SK-N-SH (cell line): ENCODE measurements at regions of chr3 and their contacts with region 1.

Region 1: GRCh38 chr3:12706504-12707253 is 42.8 kb upstream of the RAF1 start:
- DNase-seq: peak; percentile 73
- H3K4me3 ChIP-seq: no peak overlapping the region
- H3K27ac ChIP-seq: no peak overlapping the region
- H3K4me1 ChIP-seq: peaks cover 0 to 5% of the 10 kb centered on the region in 2 experiments; a peak in 1 of 4 replicates
- H3K27me3 ChIP-seq: no peaks in the 10 kb centered on the region
- CTCF ChIP-seq: peak; percentile 76
- EP300 ChIP-seq: no peak
- RAD21 ChIP-seq: peak; percentile 83

Region 2: DNA sequence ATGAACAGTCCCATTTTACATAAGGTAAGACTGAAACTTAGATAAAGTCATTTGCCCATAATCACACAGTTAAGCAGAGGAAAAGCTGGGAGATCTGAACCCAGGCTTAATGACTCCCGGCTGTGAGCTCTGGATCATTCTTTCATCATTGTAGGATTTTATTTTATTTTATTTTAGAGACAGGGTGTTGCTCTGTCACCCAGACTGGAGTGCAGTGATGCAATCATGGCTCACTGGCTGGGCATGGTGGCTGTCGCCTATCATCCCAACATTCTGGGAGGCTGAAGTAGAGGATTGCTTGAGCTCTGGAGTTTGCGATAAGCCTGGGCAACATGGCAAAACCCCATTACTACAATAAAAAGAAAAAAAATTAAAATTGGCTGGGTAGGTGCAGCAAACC is 11.6 kb before region 1 on chr3:
- CTCF ChIA-PET with region 1: interaction called, 19 read pairs
- POLR2A ChIA-PET with region 1: no interaction called
- DNase-seq: no peak
- H3K4me3 ChIP-seq: no peak overlapping the region
- H3K27ac ChIP-seq: no peak overlapping the region
- H3K4me1 ChIP-seq: no peaks in the 10 kb centered on the region; a peak in 1 of 4 replicates
- H3K27me3 ChIP-seq: no peaks in the 10 kb centered on the region
- CTCF ChIP-seq: no peak
- EP300 ChIP-seq: no peak
- RAD21 ChIP-seq: no peak

Region 3: GRCh38 chr3:12719984-12720898 is 13.6 kb after region 1 on chr3:
- CTCF ChIA-PET with region 1: interaction called, 70 read pairs
- POLR2A ChIA-PET with region 1: no interaction called
- DNase-seq: peak; percentile 82
- H3K4me3 ChIP-seq: peak overlapping the region; percentile 35 to 67
- H3K27ac ChIP-seq: no peak overlapping the region
- H3K4me1 ChIP-seq: no peaks in the 10 kb centered on the region; a peak in 1 of 4 replicates
- H3K27me3 ChIP-seq: no peaks in the 10 kb centered on the region
- CTCF ChIP-seq: peak; percentile 97
- EP300 ChIP-seq: no peak
- RAD21 ChIP-seq: peak; percentile 90

Region 4: GRCh38 chr3:12768579-12769527 is 62.2 kb after region 1 on chr3:
- CTCF ChIA-PET with region 1: no interaction called
- POLR2A ChIA-PET with region 1: no interaction called
- DNase-seq: no peak
- H3K4me3 ChIP-seq: no peak overlapping the region
- H3K27ac ChIP-seq: no peak overlapping the region
- H3K4me1 ChIP-seq: no peaks in the 10 kb centered on the region
- H3K27me3 ChIP-seq: no peaks in the 10 kb centered on the region
- CTCF ChIP-seq: no peak
- EP300 ChIP-seq: no peak
- RAD21 ChIP-seq: no peak